ENCODE measurements at regions of chr6 and their contacts with region 1.

Region 1: GRCh38 chr6:126396131-126396530 is 56.2 kb downstream of the CENPW start:
- DNase-seq: no peak
- H3K4me3 ChIP-seq: no peak overlapping the region
- H3K27ac ChIP-seq: no peak overlapping the region
- H3K4me1 ChIP-seq: no peaks in the 10 kb centered on the region
- H3K27me3 ChIP-seq: no peaks in the 10 kb centered on the region
- CTCF ChIP-seq: no peak
- POLR2A ChIP-seq: no peak

Region 2: GRCh38 chr6:127186889-127187288 is 790.8 kb after region 1 on chr6:
- intact Hi-C with region 1: loop called (anchors 10 kb)
- DNase-seq: no peak
- H3K4me3 ChIP-seq: no peak overlapping the region
- H3K27ac ChIP-seq: no peak overlapping the region
- H3K4me1 ChIP-seq: no peaks in the 10 kb centered on the region
- H3K27me3 ChIP-seq: no peaks in the 10 kb centered on the region
- CTCF ChIP-seq: peak in 1 of 3 donors; percentile 20
- POLR2A ChIP-seq: no peak

Region 3: GRCh38 chr6:127582777-127583462 is 1186.8 kb after region 1 on chr6:
- intact Hi-C with region 1: no loop called
- DNase-seq: no peak
- H3K4me3 ChIP-seq: no peak overlapping the region
- H3K27ac ChIP-seq: no peak overlapping the region
- H3K4me1 ChIP-seq: no peaks in the 10 kb centered on the region
- H3K27me3 ChIP-seq: no peaks in the 10 kb centered on the region
- CTCF ChIP-seq: no peak
- POLR2A ChIP-seq: no peak

Measured in breast epithelium (tissue), 4 donors.